HCT116 (cell line): ENCODE measurements at regions of chr1 and their contacts with region 1.

Region 1: DNA sequence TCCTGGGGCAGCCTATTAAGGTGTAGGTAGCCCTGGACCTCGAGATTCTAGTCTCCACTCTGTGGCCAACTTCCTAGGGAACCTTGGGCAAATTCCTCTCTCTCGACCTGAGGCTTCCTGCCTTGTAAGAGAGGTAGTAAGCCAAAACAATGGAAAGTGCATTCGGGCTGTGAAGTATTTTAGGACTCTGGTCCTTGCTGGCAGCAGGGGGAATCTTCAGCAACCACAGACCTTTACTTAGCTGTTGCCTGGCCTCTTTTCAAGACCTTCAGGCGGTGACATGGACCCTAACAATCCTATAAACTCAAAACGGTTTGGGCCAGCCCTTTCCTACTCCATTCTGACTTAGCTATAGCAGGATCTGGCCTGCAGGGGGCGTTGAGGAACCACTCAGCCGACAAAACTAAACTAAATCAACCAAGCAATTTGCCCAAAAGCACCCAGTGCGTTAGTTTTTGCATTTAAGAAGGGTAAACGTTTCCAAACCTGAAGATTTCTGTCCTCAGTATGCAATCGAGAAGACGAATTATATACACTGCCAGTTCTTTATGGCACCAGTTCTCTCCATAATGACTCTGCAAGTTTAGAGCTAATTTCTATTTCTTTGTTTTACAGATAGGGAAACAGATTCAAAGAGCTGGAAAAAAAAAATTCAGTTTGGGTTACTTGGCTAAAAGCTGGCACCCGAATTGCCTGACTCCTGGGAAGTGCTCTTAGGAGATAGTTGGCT is 10.9 kb upstream of the SESN2 start:
- DNase-seq: peak; percentile 64
- ATAC-seq: peak; percentile 65
- H3K4me3 ChIP-seq: peak overlapping the region; percentile 28 to 45
- H3K27ac ChIP-seq: peak overlapping the region; percentile 74
- H3K4me1 ChIP-seq: peaks cover 33 to 35% of the 10 kb centered on the region in 2 experiments
- H3K27me3 ChIP-seq: no peaks in the 10 kb centered on the region
- CTCF ChIP-seq: peak; percentile 84 to 99 (median 95)
- POLR2A ChIP-seq: no peak
- RAD21 ChIP-seq: peak; percentile 95

Region 2: DNA sequence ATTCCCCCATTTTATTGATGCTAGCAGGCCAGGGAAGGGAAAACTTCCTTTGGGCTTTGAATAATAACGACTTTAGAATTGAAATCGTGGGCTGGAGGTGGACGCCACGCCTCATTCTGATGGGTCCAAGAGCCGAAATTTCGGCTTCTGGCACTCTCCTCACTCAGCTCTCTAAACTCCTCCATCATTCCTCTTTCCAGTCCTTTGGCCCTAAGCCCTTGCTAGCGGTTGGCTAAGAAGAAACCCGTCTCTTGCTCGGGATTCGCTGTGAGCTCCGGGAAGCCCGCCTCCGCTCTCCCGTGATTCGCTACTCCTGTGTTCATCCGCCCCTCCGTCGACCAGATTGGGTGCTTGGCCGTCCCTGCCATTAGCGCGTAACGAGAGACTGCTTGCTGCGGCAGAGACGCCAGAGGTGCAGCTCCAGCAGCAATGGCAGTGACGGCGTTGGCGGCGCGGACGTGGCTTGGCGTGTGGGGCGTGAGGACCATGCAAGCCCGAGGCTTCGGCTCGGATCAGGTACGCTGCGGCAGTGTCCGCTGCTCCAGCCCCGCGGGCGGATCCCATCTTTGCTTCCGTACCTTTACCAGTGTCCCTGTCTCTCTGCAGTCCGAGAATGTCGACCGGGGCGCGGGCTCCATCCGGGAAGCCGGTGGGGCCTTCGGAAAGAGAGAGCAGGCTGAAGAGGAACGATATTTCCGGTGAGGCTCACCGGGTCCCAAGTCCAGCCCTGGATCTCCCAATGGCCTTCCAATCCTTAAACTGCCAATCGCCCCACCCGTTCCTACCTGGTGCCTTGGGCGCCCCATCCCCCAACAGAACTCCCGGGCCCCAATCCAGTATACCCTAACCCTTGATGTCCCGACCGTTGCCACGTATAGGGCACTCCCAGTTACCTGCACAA is 12.4 kb before region 1 on chr1 and contains the start of gene ATP5IF1:
- CTCF ChIA-PET with region 1: interaction called, 42 read pairs
- POLR2A ChIA-PET with region 1: interaction called, 61 read pairs
- RAD21 ChIA-PET with region 1: interaction called in 1 of 2 experiments, 3 read pairs
- intact Hi-C with region 1: no loop called
- DNase-seq: peak; percentile 96
- ATAC-seq: peak; percentile 92
- H3K4me3 ChIP-seq: peak within 1 kb of the TSS; percentile 83
- H3K27ac ChIP-seq: peak within 1 kb of the TSS; percentile 72
- H3K4me1 ChIP-seq: peaks cover 12 to 31% of the 10 kb centered on the region in 2 experiments
- H3K27me3 ChIP-seq: no peaks in the 10 kb centered on the region
- CTCF ChIP-seq: no peak
- POLR2A ChIP-seq: peak; percentile 94
- RAD21 ChIP-seq: no peak
- total RNA-seq, gene ATP5IF1: 169 TPM

Region 3: DNA sequence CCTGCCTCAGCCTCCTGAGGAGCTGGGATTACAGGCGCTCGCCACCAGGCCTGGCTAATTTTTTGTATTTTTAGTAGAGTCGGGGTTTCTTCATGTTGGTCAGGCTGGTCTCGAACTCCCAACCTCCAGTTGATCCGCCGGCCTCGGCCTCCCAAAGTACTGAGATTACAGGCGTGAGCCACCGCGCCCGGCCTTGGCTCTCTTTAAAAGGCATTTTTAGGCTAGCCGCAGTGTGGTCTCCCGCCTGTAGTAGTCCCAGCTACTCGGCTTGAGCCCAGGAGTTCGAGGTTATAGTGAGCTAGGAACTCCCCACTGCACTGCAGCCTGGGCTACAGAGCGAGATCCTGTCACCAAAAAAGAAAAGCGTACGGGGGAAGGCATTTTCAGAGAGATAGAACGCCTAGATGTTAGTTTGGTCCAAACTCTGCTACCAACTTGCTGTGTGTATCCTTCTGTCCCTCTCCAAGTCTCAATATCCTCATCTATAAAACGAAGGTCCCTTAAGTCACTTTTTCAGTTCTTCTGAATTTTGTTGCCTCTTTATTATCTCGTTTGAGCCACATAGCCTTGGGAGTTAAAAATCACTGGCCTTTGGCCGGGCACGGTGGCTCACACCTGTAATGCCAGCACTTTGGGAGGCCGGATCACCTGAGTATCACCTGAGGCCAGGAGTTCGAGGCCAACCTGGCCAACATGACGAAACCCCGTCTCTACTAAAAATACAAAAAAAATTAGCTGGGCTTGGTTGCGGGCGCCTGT is 81.1 kb after region 1 on chr1:
- CTCF ChIA-PET with region 1: interaction called, 10 read pairs
- POLR2A ChIA-PET with region 1: interaction called, 14 read pairs
- RAD21 ChIA-PET with region 1: interaction called in 1 of 2 experiments, 3 read pairs
- intact Hi-C with region 1: no loop called
- DNase-seq: no peak
- ATAC-seq: peak; percentile 55
- H3K4me3 ChIP-seq: peak overlapping the region; percentile 68 to 91
- H3K27ac ChIP-seq: peak overlapping the region; percentile 84
- H3K4me1 ChIP-seq: peaks cover 4 to 18% of the 10 kb centered on the region in 2 experiments; a peak in 3 of 4 replicates
- H3K27me3 ChIP-seq: no peaks in the 10 kb centered on the region
- CTCF ChIP-seq: no peak
- POLR2A ChIP-seq: no peak
- RAD21 ChIP-seq: no peak; the same call in 1 of the 2 replicates

Region 4: GRCh38 chr1:28359592-28360239 is 111.3 kb after region 1 on chr1:
- CTCF ChIA-PET with region 1: interaction called, 18 read pairs
- POLR2A ChIA-PET with region 1: interaction called, 3 read pairs
- RAD21 ChIA-PET with region 1: interaction called in 1 of 2 experiments, 3 read pairs
- intact Hi-C with region 1: loop called (anchors 5 kb)
- DNase-seq: no peak
- ATAC-seq: peak; percentile 91
- H3K4me3 ChIP-seq: no peak overlapping the region
- H3K27ac ChIP-seq: no peak overlapping the region
- H3K4me1 ChIP-seq: peaks cover 0 to 3% of the 10 kb centered on the region in 2 experiments; a peak in 1 of 4 replicates
- H3K27me3 ChIP-seq: no peaks in the 10 kb centered on the region
- CTCF ChIP-seq: peak; percentile 63 to 77 (median 66); a peak in 5 of 6 replicates
- POLR2A ChIP-seq: no peak
- RAD21 ChIP-seq: peak; percentile 73

Region 5: DNA sequence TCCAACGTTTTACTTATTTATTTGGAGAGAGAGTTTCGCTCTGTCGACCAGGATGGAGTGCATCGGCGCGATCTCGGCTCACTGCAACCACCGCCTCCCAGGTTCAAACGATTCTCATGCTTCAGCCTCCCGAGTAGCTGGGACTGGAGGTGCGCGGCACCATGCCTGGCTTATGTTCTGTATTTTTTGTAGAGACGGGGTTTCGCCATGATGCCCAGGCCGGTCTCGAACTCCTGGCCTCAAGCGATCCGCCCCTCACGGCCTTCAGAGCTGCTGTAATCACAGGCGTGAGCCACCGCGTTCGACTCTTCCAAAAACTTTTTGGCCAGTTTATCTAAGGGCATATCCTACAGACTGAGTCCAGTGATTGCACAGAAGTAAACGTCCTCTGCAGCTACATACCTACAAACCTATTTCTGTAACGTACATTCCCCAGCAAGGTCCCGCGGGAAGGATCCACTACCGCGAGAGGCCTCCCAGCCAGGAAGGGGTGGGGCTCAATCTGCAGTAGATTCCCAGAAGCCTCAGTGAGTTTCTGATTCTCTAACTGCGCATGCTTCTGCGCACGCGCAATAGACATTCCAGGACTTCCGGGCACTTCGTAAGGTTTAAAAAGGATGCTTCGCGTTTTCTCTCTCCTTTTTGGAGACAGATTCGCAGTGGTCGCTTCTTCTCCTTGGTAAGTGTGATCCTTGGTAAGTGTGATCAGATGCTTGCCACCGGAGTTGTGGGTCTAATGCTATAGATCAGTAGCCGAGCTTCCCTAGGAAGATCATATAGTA is 257.1 kb after region 1 on chr1 and contains the start of gene RCC1:
- CTCF ChIA-PET with region 1: interaction called, 7 read pairs
- POLR2A ChIA-PET with region 1: interaction called, 13 read pairs
- RAD21 ChIA-PET with region 1: no interaction called
- intact Hi-C with region 1: loop called (anchors 5 kb)
- DNase-seq: peak; percentile 97
- ATAC-seq: peak; percentile 62
- H3K4me3 ChIP-seq: peak within 1 kb of the TSS; percentile 82 to 94
- H3K27ac ChIP-seq: peak within 1 kb of the TSS; percentile 97
- H3K4me1 ChIP-seq: peaks cover 29 to 72% of the 10 kb centered on the region in 2 experiments
- H3K27me3 ChIP-seq: no peaks in the 10 kb centered on the region
- CTCF ChIP-seq: no peak
- POLR2A ChIP-seq: peak; percentile 99
- RAD21 ChIP-seq: no peak
- total RNA-seq, gene RCC1: 124 TPM

Region 6: DNA sequence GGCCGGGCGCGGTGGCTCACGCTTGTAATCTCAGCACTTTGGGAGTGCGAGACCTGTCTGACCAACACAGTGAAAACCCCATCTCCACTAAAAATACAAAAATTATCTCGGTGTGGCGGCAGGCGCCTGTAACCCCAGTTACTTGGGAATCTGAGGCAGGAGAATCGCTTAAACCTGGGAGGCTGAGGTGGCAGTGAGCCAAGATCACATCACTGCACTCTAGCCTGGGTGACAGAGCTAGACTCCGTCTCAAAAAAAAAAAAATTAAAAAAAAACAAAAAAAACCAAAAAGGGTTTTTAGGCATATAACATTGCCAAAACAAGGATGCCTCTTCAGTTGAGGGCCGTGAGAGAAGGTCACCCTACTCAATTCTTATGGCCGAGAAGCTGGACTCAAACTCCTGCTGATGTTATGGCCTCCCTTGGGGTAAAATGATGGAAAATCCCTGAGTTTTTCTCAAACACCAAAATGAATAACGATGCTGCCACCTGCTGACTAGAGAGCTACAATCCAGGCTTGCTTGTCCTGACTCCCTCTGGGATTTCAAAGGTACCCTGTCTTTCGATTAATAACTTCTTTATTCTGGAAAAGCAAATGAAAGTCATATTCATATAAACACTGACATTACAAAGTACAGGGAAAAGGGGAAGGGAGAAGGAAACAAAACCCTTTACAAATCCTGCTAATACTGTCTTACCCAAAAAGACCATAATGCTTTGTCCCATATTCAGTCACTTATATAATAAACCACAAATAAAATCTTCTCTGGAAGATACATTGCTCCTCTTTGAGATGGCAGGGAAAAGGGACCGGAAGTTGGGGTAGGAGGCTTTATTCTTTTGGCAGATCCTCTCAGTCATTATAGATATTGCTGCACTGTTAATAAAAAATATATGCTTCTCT is 354.3 kb after region 1 on chr1:
- CTCF ChIA-PET with region 1: interaction called, 21 read pairs
- POLR2A ChIA-PET with region 1: no interaction called
- RAD21 ChIA-PET with region 1: no interaction called
- intact Hi-C with region 1: loop called (anchors 2 kb)
- DNase-seq: no peak
- ATAC-seq: peak; percentile 60
- H3K4me3 ChIP-seq: no peak overlapping the region
- H3K27ac ChIP-seq: peak overlapping the region; percentile 57
- H3K4me1 ChIP-seq: peaks cover 17 to 33% of the 10 kb centered on the region in 2 experiments
- H3K27me3 ChIP-seq: no peaks in the 10 kb centered on the region
- CTCF ChIP-seq: peak; percentile 73 to 87 (median 84)
- POLR2A ChIP-seq: no peak
- RAD21 ChIP-seq: peak; percentile 96